Heart right ventricle (tissue), 16 donors: ENCODE measurements at regions of chr1 and their contacts with region 1.

Region 1: GRCh38 chr1:7733276-7733675 is 37.8 kb upstream of the VAMP3 start:
- DNase-seq: no peak
- ATAC-seq: no peak
- H3K4me3 ChIP-seq: no peak overlapping the region
- H3K27ac ChIP-seq: no peak overlapping the region
- H3K4me1 ChIP-seq: peaks cover 0 to 6% (median 0%) of the 10 kb centered on the region in 9 donors
- H3K27me3 ChIP-seq: no peaks in the 10 kb centered on the region
- CTCF ChIP-seq: no peak

Region 2: DNA sequence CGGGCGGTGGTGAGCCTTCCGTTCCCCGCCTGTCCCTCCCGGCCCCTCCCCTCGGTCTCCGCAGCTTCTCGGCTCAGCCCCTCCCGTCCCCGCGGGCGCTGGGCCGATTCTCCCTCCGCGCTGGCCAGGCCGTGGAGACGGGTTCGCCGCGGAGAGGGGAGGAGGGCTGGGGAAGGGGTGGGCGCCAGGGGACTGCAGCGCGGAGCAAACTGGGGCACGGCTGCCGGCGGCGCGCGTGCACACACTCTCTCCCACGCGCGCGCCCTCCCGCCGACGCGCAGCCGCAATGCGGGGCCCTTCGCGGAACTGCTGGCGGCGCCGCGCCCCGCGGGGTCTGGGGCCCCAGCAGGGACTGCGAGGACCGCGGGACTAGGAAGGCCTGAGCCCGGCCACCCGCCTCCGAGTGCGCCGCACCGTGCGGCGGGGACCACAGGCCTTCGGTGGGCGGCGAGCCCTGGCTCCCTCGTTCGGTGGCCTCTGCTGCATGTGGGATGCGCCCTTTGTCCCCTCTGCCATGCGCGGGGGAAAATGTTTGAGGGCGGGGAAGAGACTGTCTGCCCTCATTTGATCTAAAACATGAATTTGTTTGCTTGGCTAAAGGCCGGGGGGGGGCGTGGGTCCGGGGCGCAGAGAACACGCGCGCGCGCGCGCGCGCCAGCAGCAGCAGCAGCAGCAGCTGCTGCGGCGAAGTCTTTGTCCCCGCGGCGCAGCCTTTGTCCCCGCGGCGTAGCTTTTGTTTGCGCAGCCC is 52.9 kb before region 1 on chr1:
- intact Hi-C with region 1: loop called in 2 of 10 experiments (anchors 5 kb)
- DNase-seq: peak; percentile 49 to 63
- ATAC-seq: peak; percentile 58 to 88 (median 75)
- H3K4me3 ChIP-seq: peak overlapping the region; percentile 60 to 97 (median 72)
- H3K27ac ChIP-seq: peak overlapping the region in 9 of 10 donors; percentile 13 to 84 (median 64)
- H3K4me1 ChIP-seq: peaks cover 0 to 12% (median 9%) of the 10 kb centered on the region in 9 donors
- H3K27me3 ChIP-seq: peaks cover 0 to 26% (median 0%) of the 10 kb centered on the region in 7 donors
- CTCF ChIP-seq: no peak

Region 3: DNA sequence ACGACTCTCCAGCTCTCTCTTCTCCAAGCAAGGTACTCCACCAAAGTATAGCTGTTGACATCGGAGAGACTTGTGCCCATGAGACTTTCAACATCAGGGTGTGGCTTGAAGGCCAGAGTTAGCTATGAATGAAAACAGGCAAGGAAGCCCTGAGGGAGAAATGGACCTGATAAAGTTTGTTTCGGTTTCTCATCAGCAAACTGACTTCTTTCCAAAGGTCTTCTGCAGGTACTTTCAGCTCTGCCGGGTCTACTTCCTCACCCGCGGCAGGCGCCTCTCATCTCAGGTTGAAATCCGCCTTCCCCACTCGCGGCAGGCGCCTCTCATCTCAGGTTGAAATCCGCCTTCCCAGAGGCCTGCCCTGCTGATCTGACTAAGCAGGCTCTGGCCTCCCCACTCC is 48.8 kb after region 1 on chr1:
- intact Hi-C with region 1: no loop called
- DNase-seq: no peak
- ATAC-seq: no peak
- H3K4me3 ChIP-seq: no peak overlapping the region
- H3K27ac ChIP-seq: peak overlapping the region in 5 of 10 donors; percentile 3 to 99 (median 86)
- H3K4me1 ChIP-seq: peaks cover 3 to 48% (median 29%) of the 10 kb centered on the region in 9 donors
- H3K27me3 ChIP-seq: no peaks in the 10 kb centered on the region
- CTCF ChIP-seq: no peak